Breast epithelium (tissue), 4 donors: ENCODE measurements at regions of chr2 and their contacts with region 1.

Region 1: DNA sequence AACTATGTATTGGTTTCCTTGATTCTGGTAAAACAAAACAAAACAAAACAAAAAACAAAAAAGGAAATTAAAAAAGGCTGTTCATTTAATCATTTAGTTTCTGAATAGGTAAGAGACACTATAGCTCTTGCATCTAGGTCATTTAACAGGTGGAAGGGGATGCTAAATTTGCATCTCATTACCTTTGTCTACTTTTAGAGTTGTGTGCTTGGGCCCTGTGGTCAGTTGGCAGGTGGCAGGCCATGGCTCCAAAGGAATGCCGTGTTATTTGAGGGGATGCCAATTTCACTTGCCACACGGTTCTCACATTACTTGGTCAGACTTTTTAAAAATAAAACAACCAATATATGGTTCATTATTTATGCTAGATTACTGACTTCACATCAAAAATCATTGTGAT is 9.2 kb downstream of the GALNT13 start:
- DNase-seq: no peak
- H3K4me3 ChIP-seq: no peak overlapping the region
- H3K27ac ChIP-seq: no peak overlapping the region
- H3K4me1 ChIP-seq: no peaks in the 10 kb centered on the region
- H3K27me3 ChIP-seq: peaks cover 0 to 6% of the 10 kb centered on the region in 2 donors
- CTCF ChIP-seq: no peak
- POLR2A ChIP-seq: no peak

Region 2: DNA sequence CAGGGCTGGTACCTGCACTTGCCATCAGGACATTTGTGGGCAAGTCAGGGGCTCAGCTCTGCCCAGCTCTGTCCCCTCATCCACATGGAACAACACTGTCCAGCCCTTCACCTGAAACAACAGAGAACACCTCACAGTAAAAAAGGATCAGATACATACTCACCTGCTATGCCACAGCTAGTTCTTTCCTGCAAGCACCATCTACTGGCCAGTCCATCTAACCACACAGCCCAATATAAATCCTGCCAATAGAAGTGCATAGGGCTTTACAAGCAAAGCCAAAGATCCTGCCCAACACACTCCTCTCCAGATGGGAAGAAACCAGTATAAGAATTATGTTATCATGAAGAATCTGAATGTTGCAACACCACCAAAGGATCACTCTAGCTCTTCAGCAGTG is 61.4 kb before region 1 on chr2:
- intact Hi-C with region 1: loop called (anchors 2 kb)
- DNase-seq: no peak
- H3K4me3 ChIP-seq: no peak overlapping the region
- H3K27ac ChIP-seq: no peak overlapping the region
- H3K4me1 ChIP-seq: no peaks in the 10 kb centered on the region
- H3K27me3 ChIP-seq: no peaks in the 10 kb centered on the region
- CTCF ChIP-seq: no peak
- POLR2A ChIP-seq: no peak